ENCODE measurements at regions of chr13 and their contacts with region 1.

Region 1: GRCh38 chr13:32246468-32246867 is 68.7 kb downstream of the ZAR1L start:
- DNase-seq: peak; percentile 82
- H3K4me3 ChIP-seq: no peak overlapping the region
- H3K27ac ChIP-seq: no peak overlapping the region
- H3K4me1 ChIP-seq: peaks cover 3% of the 10 kb centered on the region
- H3K27me3 ChIP-seq: no peaks in the 10 kb centered on the region
- CTCF ChIP-seq: peak; percentile 81 to 83
- POLR2A ChIP-seq: no peak

Region 2: GRCh38 chr13:32019612-32020233 is 226.7 kb before region 1 on chr13:
- CTCF ChIA-PET with region 1: interaction called, 4 read pairs
- POLR2A ChIA-PET with region 1: no interaction called
- dilution Hi-C with region 1: no loop called
- intact Hi-C with region 1: loop called (anchors 2 kb)
- DNase-seq: peak; percentile 84
- H3K4me3 ChIP-seq: no peak overlapping the region
- H3K27ac ChIP-seq: no peak overlapping the region
- H3K4me1 ChIP-seq: no peaks in the 10 kb centered on the region
- H3K27me3 ChIP-seq: peaks cover 0 to 10% of the 10 kb centered on the region in 2 experiments
- CTCF ChIP-seq: peak; percentile 75 to 79
- POLR2A ChIP-seq: no peak

Region 3: DNA sequence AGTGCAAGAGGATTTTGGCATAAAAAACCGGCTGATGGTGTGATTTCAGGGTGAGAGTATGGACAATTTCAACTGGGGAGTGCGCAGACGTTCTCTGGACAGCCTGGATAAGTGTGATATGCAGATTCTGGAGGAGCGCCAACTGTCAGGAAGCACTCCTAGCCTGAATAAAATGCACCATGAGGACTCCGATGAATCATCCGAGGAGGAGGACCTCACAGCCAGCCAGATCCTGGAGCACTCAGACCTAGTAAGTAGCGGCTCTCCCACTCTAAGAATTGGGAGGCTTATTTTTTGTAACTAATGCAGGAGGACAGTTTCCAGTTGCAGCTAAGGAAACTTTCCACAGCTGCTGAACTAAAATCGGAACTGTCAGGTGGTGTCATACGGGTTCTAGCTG is 15.1 kb after region 1 on chr13:
- CTCF ChIA-PET with region 1: interaction called, 41 read pairs
- POLR2A ChIA-PET with region 1: no interaction called
- dilution Hi-C with region 1: no loop called
- intact Hi-C with region 1: no loop called
- DNase-seq: peak; percentile 99
- H3K4me3 ChIP-seq: peak overlapping the region; percentile 36 to 75 (median 43)
- H3K27ac ChIP-seq: peak overlapping the region; percentile 86
- H3K4me1 ChIP-seq: peaks cover 70% of the 10 kb centered on the region
- H3K27me3 ChIP-seq: no peaks in the 10 kb centered on the region
- CTCF ChIP-seq: no peak
- POLR2A ChIP-seq: peak; percentile 87

Region 4: DNA sequence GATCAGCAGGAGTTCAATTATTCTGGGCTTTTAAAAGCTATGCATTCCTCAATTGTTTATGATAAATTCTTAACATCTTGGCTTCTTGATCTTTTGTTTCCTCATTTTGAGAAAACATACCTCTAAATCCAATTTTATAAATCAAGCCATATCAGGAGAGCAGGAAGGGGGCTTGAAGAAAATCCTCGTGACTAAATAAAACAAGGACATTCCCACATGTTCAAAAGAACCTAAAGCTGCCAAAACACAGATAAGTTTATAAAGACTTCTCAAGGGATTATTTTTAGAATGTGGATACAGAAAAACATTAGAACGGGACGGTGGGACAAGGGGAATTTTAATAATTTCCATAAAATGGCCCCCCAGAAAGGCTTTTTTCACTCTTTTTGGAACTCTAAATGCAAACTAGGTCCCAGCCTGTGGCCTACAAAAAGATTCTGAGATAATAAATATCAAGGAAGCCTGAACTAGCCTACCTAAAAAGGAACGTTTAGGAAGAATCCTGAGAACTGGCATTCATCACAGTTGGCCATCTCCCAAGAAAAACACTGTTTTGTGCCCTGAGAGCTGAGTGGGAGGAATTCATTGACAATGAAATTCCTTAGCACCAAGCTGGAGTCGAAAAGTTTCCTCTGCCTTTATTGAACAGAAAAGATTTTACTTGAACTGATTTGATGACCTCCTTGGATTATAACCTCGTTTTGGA is 38.6 kb after region 1 on chr13:
- CTCF ChIA-PET with region 1: interaction called, 19 read pairs
- POLR2A ChIA-PET with region 1: no interaction called
- dilution Hi-C with region 1: no loop called
- intact Hi-C with region 1: loop called (anchors 2 kb)
- DNase-seq: peak; percentile 98
- H3K4me3 ChIP-seq: no peak overlapping the region
- H3K27ac ChIP-seq: peak overlapping the region; percentile 82
- H3K4me1 ChIP-seq: peaks cover 27% of the 10 kb centered on the region
- H3K27me3 ChIP-seq: no peaks in the 10 kb centered on the region
- CTCF ChIP-seq: no peak
- POLR2A ChIP-seq: no peak

Region 5: DNA sequence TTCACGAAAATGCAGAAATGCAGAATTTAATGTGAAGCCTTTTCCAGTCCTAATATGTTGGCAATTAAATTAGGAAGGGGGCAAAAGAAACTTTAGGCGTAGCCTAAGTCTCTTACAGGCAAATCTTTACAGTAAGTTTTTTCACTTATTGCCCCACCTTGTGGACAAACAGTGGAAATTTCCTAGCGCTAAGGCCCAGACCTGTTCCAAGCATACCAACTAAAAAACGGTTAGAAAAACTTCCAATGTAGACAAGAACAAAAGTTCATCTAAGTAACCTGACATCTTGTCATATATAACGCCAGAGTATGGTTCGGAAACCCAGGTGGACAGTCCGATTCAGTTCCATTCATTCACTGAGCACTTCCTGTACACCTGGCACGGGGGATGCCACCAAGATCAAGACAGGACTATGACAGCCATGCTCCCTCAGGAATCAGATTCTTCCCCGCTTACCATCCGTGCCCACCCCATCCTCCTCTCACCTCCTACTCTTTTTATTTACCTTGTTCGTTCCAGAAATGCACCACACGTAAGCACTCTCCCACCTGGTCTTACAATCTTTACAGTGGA is 63.8 kb after region 1 on chr13:
- CTCF ChIA-PET with region 1: interaction called, 47 read pairs
- POLR2A ChIA-PET with region 1: interaction called, 3 read pairs
- dilution Hi-C with region 1: no loop called
- intact Hi-C with region 1: loop called (anchors 1 kb)
- DNase-seq: peak; percentile 72
- H3K4me3 ChIP-seq: no peak overlapping the region
- H3K27ac ChIP-seq: no peak overlapping the region
- H3K4me1 ChIP-seq: peaks cover 14% of the 10 kb centered on the region
- H3K27me3 ChIP-seq: no peaks in the 10 kb centered on the region
- CTCF ChIP-seq: peak; percentile 56 to 60
- POLR2A ChIP-seq: no peak

Region 6: GRCh38 chr13:32427852-32428580 is 181.5 kb after region 1 on chr13 and contains the start of gene N4BP2L1:
- CTCF ChIA-PET with region 1: no interaction called
- POLR2A ChIA-PET with region 1: no interaction called
- dilution Hi-C with region 1: no loop called
- intact Hi-C with region 1: loop called (anchors 10 kb)
- DNase-seq: peak; percentile 56
- H3K4me3 ChIP-seq: peak within 1 kb of the TSS; percentile 48 to 79 (median 62)
- H3K27ac ChIP-seq: no peak within 1 kb of the TSS
- H3K4me1 ChIP-seq: peaks cover 13% of the 10 kb centered on the region
- H3K27me3 ChIP-seq: no peaks in the 10 kb centered on the region
- CTCF ChIP-seq: no peak
- POLR2A ChIP-seq: no peak
- total RNA-seq, gene N4BP2L1: 1.8 and 2.1 TPM in 2 replicates

Measured in endothelial cell of umbilical vein (primary cell).